HEK293T (cell line): ENCODE measurements at regions of chr19 and their contacts with region 1.

Region 1: GRCh38 chr19:55643348-55644176 is at the start of gene ZNF581:
- DNase-seq: peak; percentile 61

Region 2: DNA sequence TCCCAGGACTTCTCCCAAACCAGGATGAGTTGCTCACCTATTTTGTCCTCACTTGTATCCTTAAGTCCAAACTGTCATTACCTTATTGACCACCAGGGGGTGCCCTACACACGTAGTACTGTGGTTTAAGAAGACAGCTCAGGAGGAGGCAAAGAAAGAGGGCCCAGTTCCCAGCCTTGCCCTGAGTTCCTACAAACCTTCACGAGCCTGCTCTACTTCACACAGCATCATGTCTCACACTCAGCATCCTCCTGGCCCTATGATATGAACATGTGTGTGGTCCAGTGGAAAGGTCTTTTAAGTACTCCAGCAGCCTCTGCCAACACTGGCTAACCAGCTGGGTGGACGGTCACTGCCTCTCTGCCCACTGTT is 11.1 kb before region 1 on chr19:
- CTCF ChIA-PET with region 1: interaction called, 12 read pairs
- POLR2A ChIA-PET with region 1: interaction called, 4 read pairs
- DNase-seq: peak; percentile 63

Region 3: GRCh38 chr19:55688422-55689246 is 45.1 kb after region 1 on chr19:
- CTCF ChIA-PET with region 1: no interaction called
- POLR2A ChIA-PET with region 1: no interaction called
- DNase-seq: no peak